Activated naive CD4-positive, alpha-beta T cell treated with anti-CD3 and anti-CD28 coated beads for 36 hours (primary cell): ENCODE measurements at regions of chr9 and their contacts with region 1.

Region 1: DNA sequence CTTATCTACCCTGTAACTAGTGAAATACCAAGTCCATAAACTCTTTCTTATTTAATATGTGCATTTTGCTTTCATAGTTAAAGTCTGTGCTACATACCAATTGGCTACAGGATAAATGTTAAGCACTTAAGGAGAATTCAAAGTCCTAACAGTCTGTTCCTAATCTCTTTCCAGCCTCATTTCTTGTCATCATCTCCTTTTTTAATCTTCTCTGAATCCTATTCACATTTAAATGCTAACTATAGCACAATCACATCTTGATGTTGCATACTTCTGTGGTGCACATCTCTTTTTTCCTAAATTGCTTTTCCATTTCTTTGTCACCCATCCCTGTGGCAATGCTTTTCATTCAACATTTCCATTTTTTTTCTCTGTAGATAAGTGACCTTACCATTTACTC is 996.1 kb upstream of the TYRP1 start:
- DNase-seq: no peak
- H3K4me3 Mint-ChIP-seq: no peak overlapping the region
- H3K27ac Mint-ChIP-seq: no peak overlapping the region
- H3K4me1 Mint-ChIP-seq: no peaks in the 10 kb centered on the region
- H3K27me3 Mint-ChIP-seq: no peaks in the 10 kb centered on the region

Region 2: DNA sequence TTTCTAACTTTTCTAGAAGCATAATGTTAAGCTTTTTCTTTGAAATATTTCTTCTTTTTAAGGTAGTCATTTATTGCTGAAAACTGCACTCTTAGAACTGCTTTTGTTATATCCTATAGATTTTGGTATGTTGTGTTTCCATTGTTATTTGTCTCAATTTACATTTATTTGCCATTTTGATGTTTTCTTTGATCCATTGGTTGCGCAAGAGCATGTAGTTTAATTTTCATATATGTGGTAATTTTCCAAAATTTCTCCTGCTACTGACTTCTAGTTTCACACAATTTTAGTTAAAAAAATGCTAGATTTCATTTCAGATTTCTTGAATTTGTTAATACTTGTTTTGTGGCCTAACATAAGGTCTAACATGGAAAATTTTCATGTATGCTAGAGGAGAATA is 33.2 kb before region 1 on chr9:
- CTCF ChIA-PET with region 1: no interaction called
- intact Hi-C with region 1: loop called (anchors 2 kb)
- DNase-seq: no peak
- H3K4me3 Mint-ChIP-seq: no peak overlapping the region
- H3K27ac Mint-ChIP-seq: no peak overlapping the region
- H3K4me1 Mint-ChIP-seq: no peaks in the 10 kb centered on the region
- H3K27me3 Mint-ChIP-seq: no peaks in the 10 kb centered on the region